Dendritic cell treated with granulocyte-macrophage colony-stimulating factor and Interleukin-4, amounts not matched to agents 40 ng/mL and 50 ng/mL, for 4 days (primary cell): ENCODE measurements at regions of chr10 and their contacts with region 1.

Region 1: DNA sequence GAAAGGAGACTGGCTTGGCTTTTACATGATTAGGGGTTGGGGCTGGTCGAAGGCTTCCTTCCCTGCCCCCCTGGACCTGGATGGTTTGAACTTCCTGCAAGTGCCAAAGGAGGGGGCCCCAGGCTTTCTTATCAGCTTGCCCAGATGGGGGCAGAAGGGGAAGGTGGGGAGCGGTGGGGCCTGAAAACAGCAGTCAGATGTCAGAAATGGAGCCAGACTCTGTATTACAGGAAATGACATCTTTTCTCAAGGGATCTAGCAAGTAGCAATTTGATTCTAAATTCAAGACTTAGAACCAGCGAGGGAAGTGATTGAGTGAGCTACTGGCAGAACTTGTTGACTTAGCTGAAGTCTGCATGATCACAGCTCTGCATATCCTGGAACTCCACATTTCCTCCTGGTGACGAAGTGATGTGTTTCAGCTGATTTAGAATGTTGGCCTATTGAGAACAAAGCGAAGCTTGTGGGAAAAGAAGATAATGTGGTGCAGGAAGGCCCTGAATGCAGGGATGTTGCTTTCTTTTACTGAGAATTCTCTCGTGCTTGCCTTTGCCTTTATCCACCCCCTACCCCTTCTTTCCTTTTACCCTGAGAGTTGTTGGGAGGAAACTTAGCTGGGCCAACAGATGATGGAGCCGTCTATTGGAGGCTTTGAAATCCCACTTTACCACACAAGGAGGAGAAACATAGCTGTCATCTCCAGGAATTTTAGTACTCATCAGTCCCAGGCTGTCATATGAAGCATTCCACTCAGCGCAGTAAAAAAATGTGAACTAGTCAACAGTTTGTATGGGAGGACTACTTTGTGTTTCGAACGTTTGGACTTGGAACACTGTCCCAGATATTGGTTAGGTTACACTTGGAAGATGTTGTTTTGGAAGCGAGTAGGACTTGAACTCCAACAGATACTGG is 43.2 kb downstream of the CCNY start:
- H3K4me3 Mint-ChIP-seq: peak overlapping the region; percentile 55
- H3K27ac Mint-ChIP-seq: peak overlapping the region; percentile 85
- H3K4me1 Mint-ChIP-seq: peaks cover 75% of the 10 kb centered on the region
- H3K27me3 Mint-ChIP-seq: no peaks in the 10 kb centered on the region

Region 2: DNA sequence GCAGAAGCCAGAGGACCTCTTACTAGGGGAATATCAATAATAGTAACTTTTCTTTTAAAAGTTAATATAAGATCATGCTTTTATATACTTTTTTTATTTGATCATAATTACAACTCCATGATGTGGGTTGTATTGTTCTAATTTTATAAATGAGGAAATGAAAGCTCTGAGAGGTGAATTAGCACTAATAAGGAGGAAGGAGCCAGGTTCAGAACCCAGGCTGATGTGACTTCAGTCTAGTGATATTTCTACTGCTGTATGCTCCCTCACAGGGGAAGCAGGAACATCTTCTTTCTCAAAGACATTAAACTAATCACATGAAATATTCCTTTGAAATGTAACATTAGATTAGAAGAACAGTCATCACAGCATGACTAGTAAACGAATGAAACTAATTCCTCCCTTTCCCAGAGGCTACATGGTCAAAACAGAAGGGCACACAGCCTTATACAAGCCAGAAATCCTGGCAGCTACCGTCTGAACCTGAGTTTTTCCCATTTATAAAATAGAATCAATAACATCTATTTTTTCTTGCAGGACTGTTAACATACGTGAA is 144.3 kb after region 1 on chr10:
- intact Hi-C with region 1: loop called (anchors 10 kb)
- H3K4me3 Mint-ChIP-seq: no peak overlapping the region
- H3K27ac Mint-ChIP-seq: no peak overlapping the region
- H3K4me1 Mint-ChIP-seq: peaks cover 56% of the 10 kb centered on the region
- H3K27me3 Mint-ChIP-seq: no peaks in the 10 kb centered on the region